CD4-positive, alpha-beta T cell (primary cell): ENCODE measurements at regions of chr1 and their contacts with region 1.

Region 1: GRCh38 chr1:117059678-117060440 is at the start of gene TTF2:
- DNase-seq: peak; percentile 88 to 99 (median 93)
- ATAC-seq: peak; percentile 90
- H3K4me3 ChIP-seq: peak within 1 kb of the TSS; percentile 91
- H3K4me3 Mint-ChIP-seq: no peak within 1 kb of the TSS
- H3K27ac ChIP-seq: peak within 1 kb of the TSS; percentile 71 to 87
- H3K27ac Mint-ChIP-seq: no peak within 1 kb of the TSS
- H3K4me1 ChIP-seq: peaks cover 18% of the 10 kb centered on the region
- H3K4me1 Mint-ChIP-seq: peaks cover 46% of the 10 kb centered on the region
- H3K27me3 ChIP-seq: no peaks in the 10 kb centered on the region
- H3K27me3 Mint-ChIP-seq: no peaks in the 10 kb centered on the region
- CTCF ChIP-seq: peak; percentile 31
- total RNA-seq, gene TTF2: 35.4 to 36.6 TPM

Region 2: GRCh38 chr1:116737020-116737854 is 322.6 kb before region 1 on chr1:
- CTCF ChIA-PET with region 1: interaction called, 8 read pairs
- POLR2A ChIA-PET with region 1: interaction called, 51 read pairs
- intact Hi-C with region 1: loop called (anchors 1 to 2 kb)
- DNase-seq: peak; percentile 66 to 90 (median 73)
- ATAC-seq: peak; percentile 67
- H3K4me3 ChIP-seq: peak overlapping the region; percentile 28
- H3K4me3 Mint-ChIP-seq: peak overlapping the region; percentile 76
- H3K27ac ChIP-seq: peak overlapping the region; percentile 93 to 98
- H3K27ac Mint-ChIP-seq: peak overlapping the region; percentile 99
- H3K4me1 ChIP-seq: peaks cover 57% of the 10 kb centered on the region
- H3K4me1 Mint-ChIP-seq: peaks cover 45% of the 10 kb centered on the region
- H3K27me3 ChIP-seq: no peaks in the 10 kb centered on the region
- H3K27me3 Mint-ChIP-seq: no peaks in the 10 kb centered on the region
- CTCF ChIP-seq: peak; percentile 97

Region 3: GRCh38 chr1:116769561-116769977 is 290.3 kb before region 1 on chr1:
- CTCF ChIA-PET with region 1: no interaction called
- POLR2A ChIA-PET with region 1: interaction called, 37 read pairs
- intact Hi-C with region 1: loop called in 1 of 2 experiments (anchors 10 kb)
- DNase-seq: peak in 13 of 14 experiments; percentile 60 to 94 (median 68)
- ATAC-seq: peak; percentile 79
- H3K4me3 ChIP-seq: no peak overlapping the region
- H3K4me3 Mint-ChIP-seq: peak overlapping the region; percentile 66
- H3K27ac ChIP-seq: peak overlapping the region; percentile 88 to 89
- H3K27ac Mint-ChIP-seq: peak overlapping the region; percentile 99
- H3K4me1 ChIP-seq: peaks cover 74% of the 10 kb centered on the region
- H3K4me1 Mint-ChIP-seq: peaks cover 97% of the 10 kb centered on the region
- H3K27me3 ChIP-seq: no peaks in the 10 kb centered on the region
- H3K27me3 Mint-ChIP-seq: no peaks in the 10 kb centered on the region
- CTCF ChIP-seq: no peak

Region 4: GRCh38 chr1:116881879-116882520 is 177.9 kb before region 1 on chr1:
- CTCF ChIA-PET with region 1: interaction called, 4 read pairs
- POLR2A ChIA-PET with region 1: interaction called, 15 read pairs
- intact Hi-C with region 1: no loop called
- DNase-seq: peak in 6 of 14 experiments; percentile 9 to 55 (median 31)
- ATAC-seq: no peak
- H3K4me3 ChIP-seq: no peak overlapping the region
- H3K4me3 Mint-ChIP-seq: no peak overlapping the region
- H3K27ac ChIP-seq: no peak overlapping the region
- H3K27ac Mint-ChIP-seq: no peak overlapping the region
- H3K4me1 ChIP-seq: peaks cover 23% of the 10 kb centered on the region
- H3K4me1 Mint-ChIP-seq: peaks cover 3% of the 10 kb centered on the region
- H3K27me3 ChIP-seq: no peaks in the 10 kb centered on the region
- H3K27me3 Mint-ChIP-seq: no peaks in the 10 kb centered on the region
- CTCF ChIP-seq: peak; percentile 31

Region 5: GRCh38 chr1:117121776-117122697 is 62.2 kb after region 1 on chr1:
- CTCF ChIA-PET with region 1: interaction called, 3 read pairs
- POLR2A ChIA-PET with region 1: interaction called, 5 read pairs
- intact Hi-C with region 1: loop called (anchors 2 to 5 kb)
- DNase-seq: peak; percentile 69 to 92 (median 78)
- ATAC-seq: peak; percentile 89
- H3K4me3 ChIP-seq: peak overlapping the region; percentile 93
- H3K4me3 Mint-ChIP-seq: peak overlapping the region; percentile 87
- H3K27ac ChIP-seq: no peak overlapping the region
- H3K27ac Mint-ChIP-seq: no peak overlapping the region
- H3K4me1 ChIP-seq: peaks cover 17% of the 10 kb centered on the region
- H3K4me1 Mint-ChIP-seq: peaks cover 9% of the 10 kb centered on the region
- H3K27me3 ChIP-seq: peaks cover 0 to under 1% of the 10 kb centered on the region in 2 experiments
- H3K27me3 Mint-ChIP-seq: peaks cover 7% of the 10 kb centered on the region
- CTCF ChIP-seq: peak; percentile 78